Caco-2 (cell line): ENCODE measurements at regions of chr12 and their contacts with region 1.

Region 1: DNA sequence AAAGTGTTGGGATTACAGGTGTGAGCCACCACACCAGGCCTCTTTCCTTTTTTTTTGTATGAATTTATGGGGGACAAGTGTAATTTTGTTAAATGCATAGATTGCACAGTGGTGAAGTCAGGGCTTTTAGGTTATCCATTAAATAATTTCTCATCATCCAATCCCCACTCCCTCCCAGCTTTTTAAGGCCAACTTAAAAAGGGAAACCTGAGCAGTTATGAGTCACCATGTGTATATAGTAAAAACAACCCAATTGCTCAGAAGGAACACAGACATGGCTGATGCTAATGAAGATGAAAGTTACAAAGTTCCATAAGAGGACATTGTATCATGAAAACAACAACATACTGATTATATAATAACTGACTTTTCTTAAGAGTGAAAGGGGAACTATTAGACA is 25.6 kb upstream of the ARID2 start:
- DNase-seq: no peak
- H3K4me3 ChIP-seq: no peak overlapping the region
- H3K4me3 Mint-ChIP-seq: no peak overlapping the region
- H3K27ac Mint-ChIP-seq: no peak overlapping the region
- H3K4me1 ChIP-seq: peaks cover 47% of the 10 kb centered on the region
- H3K4me1 Mint-ChIP-seq: peaks cover 36% of the 10 kb centered on the region
- H3K27me3 ChIP-seq: no peaks in the 10 kb centered on the region
- H3K27me3 Mint-ChIP-seq: no peaks in the 10 kb centered on the region
- CTCF ChIP-seq: no peak

Region 2: GRCh38 chr12:45598761-45599160 is 105.2 kb before region 1 on chr12:
- CTCF ChIA-PET with region 1: no interaction called
- POLR2A ChIA-PET with region 1: no interaction called
- intact Hi-C with region 1: loop called (anchors 5 kb)
- DNase-seq: no peak
- H3K4me3 ChIP-seq: no peak overlapping the region
- H3K4me3 Mint-ChIP-seq: no peak overlapping the region
- H3K27ac Mint-ChIP-seq: no peak overlapping the region
- H3K4me1 ChIP-seq: peaks cover 12% of the 10 kb centered on the region
- H3K4me1 Mint-ChIP-seq: peaks cover 27% of the 10 kb centered on the region
- H3K27me3 ChIP-seq: no peaks in the 10 kb centered on the region
- H3K27me3 Mint-ChIP-seq: no peaks in the 10 kb centered on the region
- CTCF ChIP-seq: no peak

Region 3: DNA sequence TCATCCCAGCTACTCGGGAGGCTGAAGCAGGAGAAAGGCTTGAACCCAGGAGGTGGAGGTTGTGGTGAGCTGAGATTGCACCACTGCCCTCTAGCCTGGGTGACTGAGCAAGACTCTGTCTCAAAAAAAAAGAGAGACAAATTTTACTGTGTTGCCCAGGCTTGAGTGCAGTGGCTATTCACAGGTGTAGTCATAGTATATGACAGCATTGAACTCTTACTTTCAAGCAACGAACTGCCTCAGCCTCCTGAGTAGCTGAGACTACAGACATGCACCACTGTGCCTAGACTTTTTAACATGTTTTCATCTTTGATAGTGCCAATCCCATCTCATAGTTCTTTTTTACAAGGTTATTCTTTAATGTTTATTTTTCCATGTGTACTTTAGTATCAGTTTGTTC is 39.3 kb after region 1 on chr12:
- CTCF ChIA-PET with region 1: no interaction called
- POLR2A ChIA-PET with region 1: no interaction called
- intact Hi-C with region 1: no loop called
- DNase-seq: no peak
- H3K4me3 ChIP-seq: no peak overlapping the region
- H3K4me3 Mint-ChIP-seq: no peak overlapping the region
- H3K27ac Mint-ChIP-seq: no peak overlapping the region
- H3K4me1 ChIP-seq: no peaks in the 10 kb centered on the region; the same call in 1 of the 2 replicates
- H3K4me1 Mint-ChIP-seq: no peaks in the 10 kb centered on the region
- H3K27me3 ChIP-seq: no peaks in the 10 kb centered on the region
- H3K27me3 Mint-ChIP-seq: no peaks in the 10 kb centered on the region
- CTCF ChIP-seq: no peak